GM12878 (cell line): ENCODE measurements at regions of chr6 and their contacts with region 1.

Region 1: GRCh38 chr6:129672881-129673643 is 36.9 kb downstream of the ARHGAP18 start:
- DNase-seq: peak; percentile 60
- ATAC-seq: peak; percentile 82
- H3K4me3 ChIP-seq: peak overlapping the region; percentile 58; the same call in 1 of the 2 replicates
- H3K27ac ChIP-seq: peak overlapping the region; percentile 98
- H3K4me1 ChIP-seq: peaks cover 53% of the 10 kb centered on the region
- H3K27me3 ChIP-seq: no peaks in the 10 kb centered on the region
- CTCF ChIP-seq: no peak
- EP300 ChIP-seq: 0 out of 4 replicates have a peak, but pooled peaks of 1 of the 2 experiments have one; percentile 43
- POLR2A ChIP-seq: no peak
- RAD21 ChIP-seq: no peak

Region 2: GRCh38 chr6:129621247-129621646 is 51.8 kb before region 1 on chr6:
- CTCF ChIA-PET with region 1: interaction called, 7 read pairs
- POLR2A ChIA-PET with region 1: no interaction called
- RAD21 ChIA-PET with region 1: interaction called, 4 read pairs
- SMC1A ChIA-PET with region 1: interaction called, 9 read pairs
- in situ Hi-C with region 1: no loop called
- intact Hi-C with region 1: loop called (anchors 5 kb)
- DNase-seq: no peak
- ATAC-seq: peak; percentile 74
- H3K4me3 ChIP-seq: no peak overlapping the region
- H3K27ac ChIP-seq: no peak overlapping the region
- H3K4me1 ChIP-seq: no peaks in the 10 kb centered on the region
- H3K27me3 ChIP-seq: no peaks in the 10 kb centered on the region
- CTCF ChIP-seq: peak; percentile 29 to 50 (median 37); a peak in 4 of 6 replicates
- EP300 ChIP-seq: no peak
- POLR2A ChIP-seq: no peak
- RAD21 ChIP-seq: 0 out of 2 replicates have a peak, but pooled peaks have one; percentile 7

Region 3: GRCh38 chr6:129661536-129662405 is 11.3 kb before region 1 on chr6:
- CTCF ChIA-PET with region 1: interaction called, 15 read pairs
- POLR2A ChIA-PET with region 1: interaction called, 9 read pairs
- RAD21 ChIA-PET with region 1: interaction called, 14 read pairs
- SMC1A ChIA-PET with region 1: interaction called, 27 read pairs
- in situ Hi-C with region 1: no loop called
- intact Hi-C with region 1: no loop called
- DNase-seq: no peak
- ATAC-seq: peak; percentile 40
- H3K4me3 ChIP-seq: peak overlapping the region; percentile 7; the same call in 1 of the 2 replicates
- H3K27ac ChIP-seq: peak overlapping the region; percentile 89
- H3K4me1 ChIP-seq: peaks cover 44% of the 10 kb centered on the region
- H3K27me3 ChIP-seq: no peaks in the 10 kb centered on the region
- CTCF ChIP-seq: no peak
- EP300 ChIP-seq: peak in 1 of 2 experiments; percentile 61; a peak in 1 of 4 replicates
- POLR2A ChIP-seq: no peak
- RAD21 ChIP-seq: no peak

Region 4: DNA sequence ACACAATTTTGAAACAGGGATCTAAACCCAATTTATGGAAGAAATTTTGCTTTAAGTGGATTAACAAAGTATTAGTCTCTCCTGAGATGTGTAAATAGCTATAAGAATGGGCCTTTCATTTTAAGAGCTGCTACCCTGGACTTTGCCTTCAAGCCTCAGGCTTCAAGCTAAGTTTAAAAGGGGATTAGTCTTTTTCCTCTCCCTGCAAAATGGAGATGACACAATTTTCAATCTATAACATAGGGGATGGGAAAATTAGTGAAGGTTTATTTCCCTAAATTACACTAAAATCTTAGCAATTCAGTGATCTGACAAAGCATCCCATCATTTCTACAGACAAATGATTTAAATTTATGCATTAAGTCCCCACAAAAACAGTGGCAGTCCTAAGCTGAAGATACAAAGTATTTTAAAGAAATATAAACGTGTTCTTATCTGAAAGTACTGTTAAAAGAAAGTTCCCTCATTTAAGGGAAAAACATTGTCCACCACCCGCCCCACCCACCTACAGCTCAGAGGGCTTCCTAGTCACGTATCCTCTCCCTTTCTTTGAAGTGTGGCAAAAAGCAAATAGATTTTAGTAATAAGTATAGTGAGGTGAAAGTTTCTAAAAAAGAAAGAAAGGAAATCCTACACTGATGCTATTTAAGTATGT is 22.4 kb after region 1 on chr6:
- CTCF ChIA-PET with region 1: interaction called, 30 read pairs
- POLR2A ChIA-PET with region 1: interaction called, 8 read pairs
- RAD21 ChIA-PET with region 1: interaction called, 17 read pairs
- SMC1A ChIA-PET with region 1: interaction called, 93 read pairs
- in situ Hi-C with region 1: no loop called
- intact Hi-C with region 1: no loop called
- DNase-seq: no peak
- ATAC-seq: peak; percentile 64
- H3K4me3 ChIP-seq: peak overlapping the region; percentile 48
- H3K27ac ChIP-seq: peak overlapping the region; percentile 60
- H3K4me1 ChIP-seq: peaks cover 64% of the 10 kb centered on the region
- H3K27me3 ChIP-seq: no peaks in the 10 kb centered on the region
- CTCF ChIP-seq: no peak
- EP300 ChIP-seq: no peak; a peak in 1 of 4 replicates
- POLR2A ChIP-seq: no peak
- RAD21 ChIP-seq: no peak

Region 5: GRCh38 chr6:129709769-129710449 is 36.8 kb after region 1 on chr6 and contains the start of gene ARHGAP18:
- CTCF ChIA-PET with region 1: interaction called, 117 read pairs
- POLR2A ChIA-PET with region 1: interaction called, 115 read pairs
- RAD21 ChIA-PET with region 1: interaction called, 189 read pairs
- SMC1A ChIA-PET with region 1: interaction called, 434 read pairs
- in situ Hi-C with region 1: no loop called
- intact Hi-C with region 1: loop called (anchors 1 kb)
- DNase-seq: peak; percentile 78
- ATAC-seq: peak; percentile 92
- H3K4me3 ChIP-seq: peak within 1 kb of the TSS; percentile 94
- H3K27ac ChIP-seq: peak within 1 kb of the TSS; percentile 73
- H3K4me1 ChIP-seq: peaks cover 17% of the 10 kb centered on the region
- H3K27me3 ChIP-seq: no peaks in the 10 kb centered on the region
- CTCF ChIP-seq: no peak
- EP300 ChIP-seq: no peak
- POLR2A ChIP-seq: peak; percentile 77
- RAD21 ChIP-seq: no peak
- polyA plus RNA-seq, gene ARHGAP18: 24.9 to 28.0 TPM

Region 6: DNA sequence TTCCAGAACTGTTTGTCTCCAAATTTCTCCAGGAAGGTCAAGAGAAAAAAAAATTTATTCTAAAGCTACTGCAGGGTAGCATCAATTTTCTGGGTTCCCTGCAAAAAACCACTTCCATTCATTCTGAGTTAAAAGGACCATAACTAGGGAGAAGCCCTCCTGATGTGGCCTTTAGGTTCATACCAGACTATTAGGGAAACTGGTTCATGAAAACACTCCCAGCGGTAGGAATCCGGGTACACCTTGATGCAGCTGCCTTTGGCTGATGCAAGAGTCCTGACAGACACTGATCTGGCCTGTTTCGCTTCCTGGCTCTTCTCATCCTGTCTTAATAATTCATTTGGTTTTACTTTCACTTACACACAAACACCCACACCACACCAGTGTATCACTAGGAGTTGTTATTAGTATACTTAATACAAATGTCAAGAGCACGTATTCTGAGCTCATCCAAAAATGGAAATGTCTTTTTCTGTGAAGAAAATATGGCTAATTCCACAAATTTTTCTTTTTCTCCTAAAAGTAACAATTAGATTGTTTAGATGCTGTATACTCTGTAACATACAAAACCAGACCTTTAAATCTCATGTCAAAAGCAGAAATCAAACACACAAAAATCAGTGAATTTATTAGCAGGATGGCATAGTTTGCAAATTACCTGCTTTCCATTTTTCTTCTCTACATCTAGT is 75.3 kb after region 1 on chr6:
- CTCF ChIA-PET with region 1: interaction called, 5 read pairs
- POLR2A ChIA-PET with region 1: interaction called, 6 read pairs
- RAD21 ChIA-PET with region 1: interaction called, 6 read pairs
- SMC1A ChIA-PET with region 1: interaction called, 26 read pairs
- in situ Hi-C with region 1: no loop called
- intact Hi-C with region 1: loop called (anchors 1 kb)
- DNase-seq: peak; percentile 82
- ATAC-seq: peak; percentile 85
- H3K4me3 ChIP-seq: peak overlapping the region; percentile 56
- H3K27ac ChIP-seq: peak overlapping the region; percentile 96
- H3K4me1 ChIP-seq: peaks cover 42% of the 10 kb centered on the region
- H3K27me3 ChIP-seq: no peaks in the 10 kb centered on the region
- CTCF ChIP-seq: no peak
- EP300 ChIP-seq: 0 out of 4 replicates have a peak, but pooled peaks of 1 of the 2 experiments have one; percentile 29
- POLR2A ChIP-seq: peak; percentile 51
- RAD21 ChIP-seq: no peak